B cell (primary cell): ENCODE measurements at regions of chr5 and their contacts with region 1.

Region 1: DNA sequence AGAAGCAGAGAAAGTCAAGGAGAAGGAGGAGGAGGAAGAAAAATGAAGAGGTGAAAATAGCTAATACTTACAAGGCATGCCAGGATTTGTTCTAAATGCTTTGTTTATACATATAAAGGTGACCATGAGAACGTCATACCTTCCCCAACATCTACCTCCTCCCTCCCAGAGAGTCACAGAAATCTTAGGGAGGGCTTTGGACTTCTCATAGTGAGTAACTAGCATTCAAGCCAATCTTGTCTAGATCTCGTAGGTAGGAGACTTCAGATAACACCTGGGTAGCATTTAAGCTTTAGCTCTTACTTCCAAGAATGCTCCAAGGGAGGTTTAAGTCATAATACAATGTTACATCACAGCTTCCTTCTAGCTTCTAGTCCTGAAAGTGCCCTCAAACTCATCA is 36.5 kb upstream of the GPBP1 start:
- DNase-seq: no peak
- ATAC-seq: no peak
- H3K4me3 ChIP-seq: no peak overlapping the region
- H3K4me3 Mint-ChIP-seq: no peak overlapping the region
- H3K27ac ChIP-seq: no peak overlapping the region
- H3K27ac Mint-ChIP-seq: no peak overlapping the region
- H3K4me1 ChIP-seq: no peaks in the 10 kb centered on the region
- H3K4me1 Mint-ChIP-seq: no peaks in the 10 kb centered on the region
- H3K27me3 ChIP-seq: no peaks in the 10 kb centered on the region
- H3K27me3 Mint-ChIP-seq: peaks cover 12% of the 10 kb centered on the region
- CTCF ChIP-seq: no peak

Region 2: GRCh38 chr5:55936100-55936693 is 1201.2 kb before region 1 on chr5:
- CTCF ChIA-PET with region 1: interaction called, 12 read pairs
- POLR2A ChIA-PET with region 1: no interaction called
- intact Hi-C with region 1: no loop called
- DNase-seq: peak; percentile 83
- ATAC-seq: peak; percentile 89
- H3K4me3 ChIP-seq: no peak overlapping the region
- H3K4me3 Mint-ChIP-seq: no peak overlapping the region
- H3K27ac ChIP-seq: no peak overlapping the region
- H3K27ac Mint-ChIP-seq: no peak overlapping the region
- H3K4me1 ChIP-seq: no peaks in the 10 kb centered on the region
- H3K4me1 Mint-ChIP-seq: no peaks in the 10 kb centered on the region
- H3K27me3 ChIP-seq: no peaks in the 10 kb centered on the region
- H3K27me3 Mint-ChIP-seq: no peaks in the 10 kb centered on the region
- CTCF ChIP-seq: peak; percentile 92

Region 3: GRCh38 chr5:56900858-56901578 is 236.4 kb before region 1 on chr5:
- CTCF ChIA-PET with region 1: interaction called, 138 read pairs
- POLR2A ChIA-PET with region 1: interaction called, 12 read pairs
- intact Hi-C with region 1: loop called (anchors 1 kb)
- DNase-seq: peak; percentile 73
- ATAC-seq: peak; percentile 67
- H3K4me3 ChIP-seq: no peak overlapping the region
- H3K4me3 Mint-ChIP-seq: no peak overlapping the region
- H3K27ac ChIP-seq: no peak overlapping the region
- H3K27ac Mint-ChIP-seq: no peak overlapping the region
- H3K4me1 ChIP-seq: peaks cover 4 to 8% of the 10 kb centered on the region in 2 donors
- H3K4me1 Mint-ChIP-seq: no peaks in the 10 kb centered on the region
- H3K27me3 ChIP-seq: no peaks in the 10 kb centered on the region
- H3K27me3 Mint-ChIP-seq: no peaks in the 10 kb centered on the region
- CTCF ChIP-seq: peak; percentile 96

Region 4: DNA sequence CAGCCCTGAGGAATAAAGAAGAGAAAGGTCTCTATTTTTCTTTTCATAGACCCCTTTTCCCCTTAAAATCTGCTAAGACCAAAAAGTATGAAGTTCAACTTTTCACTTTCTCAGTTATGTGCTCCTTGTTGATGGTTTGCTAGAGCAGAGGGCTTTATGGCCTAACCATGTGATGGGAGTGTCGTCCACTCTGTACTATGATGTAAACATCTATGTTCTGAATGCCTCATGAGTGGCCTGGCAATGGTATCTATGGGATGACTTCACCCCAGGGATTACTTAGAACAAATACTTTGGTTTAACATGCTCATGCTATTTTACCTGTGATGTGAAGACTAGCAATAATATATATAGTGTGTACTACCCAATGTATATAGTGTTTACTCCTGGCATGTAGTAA is 141.8 kb before region 1 on chr5:
- CTCF ChIA-PET with region 1: interaction called, 14 read pairs
- POLR2A ChIA-PET with region 1: no interaction called
- intact Hi-C with region 1: no loop called
- DNase-seq: no peak
- ATAC-seq: no peak
- H3K4me3 ChIP-seq: no peak overlapping the region
- H3K4me3 Mint-ChIP-seq: no peak overlapping the region
- H3K27ac ChIP-seq: no peak overlapping the region
- H3K27ac Mint-ChIP-seq: no peak overlapping the region
- H3K4me1 ChIP-seq: no peaks in the 10 kb centered on the region
- H3K4me1 Mint-ChIP-seq: no peaks in the 10 kb centered on the region
- H3K27me3 ChIP-seq: peaks cover 0 to 4% (median 0%) of the 10 kb centered on the region in 4 experiments
- H3K27me3 Mint-ChIP-seq: peaks cover 4% of the 10 kb centered on the region
- CTCF ChIP-seq: no peak

Region 5: DNA sequence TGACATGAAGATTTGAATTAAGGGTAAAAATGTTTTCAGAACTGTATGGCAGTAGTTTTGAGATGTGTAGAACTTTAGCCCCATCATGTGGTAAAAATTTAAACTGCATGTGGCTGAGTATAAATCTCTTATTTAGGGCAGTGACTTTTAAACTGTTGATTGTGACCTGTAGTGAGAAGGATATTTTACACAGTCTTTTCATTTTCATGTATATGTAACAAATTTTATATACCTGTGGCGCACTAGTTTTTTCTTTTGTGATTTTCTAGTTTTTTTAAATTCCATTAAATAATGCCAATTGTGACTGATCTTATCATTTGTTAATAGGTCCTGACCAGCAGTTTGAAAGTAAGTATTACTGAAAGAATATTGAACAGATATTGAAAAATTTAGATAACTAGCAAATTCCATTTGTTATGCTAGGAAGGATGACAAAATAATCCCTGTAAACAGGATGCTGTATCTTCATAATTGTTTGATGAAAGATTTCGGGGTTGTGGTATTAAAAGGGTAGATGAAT is 83.7 kb after region 1 on chr5:
- CTCF ChIA-PET with region 1: interaction called, 41 read pairs
- POLR2A ChIA-PET with region 1: no interaction called
- intact Hi-C with region 1: loop called (anchors 1 kb)
- DNase-seq: peak; percentile 82
- ATAC-seq: peak; percentile 65
- H3K4me3 ChIP-seq: no peak overlapping the region
- H3K4me3 Mint-ChIP-seq: peak overlapping the region; percentile 17
- H3K27ac ChIP-seq: peak overlapping the region in 1 of 2 donors; percentile 75
- H3K27ac Mint-ChIP-seq: peak overlapping the region; percentile 21
- H3K4me1 ChIP-seq: peaks cover 3 to 4% of the 10 kb centered on the region in 2 donors
- H3K4me1 Mint-ChIP-seq: peaks cover 33% of the 10 kb centered on the region
- H3K27me3 ChIP-seq: no peaks in the 10 kb centered on the region
- H3K27me3 Mint-ChIP-seq: no peaks in the 10 kb centered on the region
- CTCF ChIP-seq: peak; percentile 96